ENCODE measurements at regions of chr7 and their contacts with region 1.

Region 1: GRCh38 chr7:1412322-1413261 is 46.7 kb downstream of the MICALL2 start:
- DNase-seq: peak; percentile 70 to 84 (median 79)
- H3K4me3 ChIP-seq: peak overlapping the region in 1 of 3 experiments; percentile 58
- H3K4me3 Mint-ChIP-seq: peak overlapping the region in 1 of 2 donors; percentile 62
- H3K27ac ChIP-seq: no peak overlapping the region
- H3K27ac Mint-ChIP-seq: peak overlapping the region in 1 of 7 donors; percentile 19
- H3K4me1 ChIP-seq: peaks cover 10 to 11% of the 10 kb centered on the region in 2 donors
- H3K4me1 Mint-ChIP-seq: peaks cover 11% of the 10 kb centered on the region
- H3K27me3 ChIP-seq: peaks cover 0 to 5% of the 10 kb centered on the region in 2 donors
- H3K27me3 Mint-ChIP-seq: peaks cover 13 to 23% (median 19%) of the 10 kb centered on the region in 3 donors
- CTCF ChIP-seq: peak; percentile 90

Region 2: DNA sequence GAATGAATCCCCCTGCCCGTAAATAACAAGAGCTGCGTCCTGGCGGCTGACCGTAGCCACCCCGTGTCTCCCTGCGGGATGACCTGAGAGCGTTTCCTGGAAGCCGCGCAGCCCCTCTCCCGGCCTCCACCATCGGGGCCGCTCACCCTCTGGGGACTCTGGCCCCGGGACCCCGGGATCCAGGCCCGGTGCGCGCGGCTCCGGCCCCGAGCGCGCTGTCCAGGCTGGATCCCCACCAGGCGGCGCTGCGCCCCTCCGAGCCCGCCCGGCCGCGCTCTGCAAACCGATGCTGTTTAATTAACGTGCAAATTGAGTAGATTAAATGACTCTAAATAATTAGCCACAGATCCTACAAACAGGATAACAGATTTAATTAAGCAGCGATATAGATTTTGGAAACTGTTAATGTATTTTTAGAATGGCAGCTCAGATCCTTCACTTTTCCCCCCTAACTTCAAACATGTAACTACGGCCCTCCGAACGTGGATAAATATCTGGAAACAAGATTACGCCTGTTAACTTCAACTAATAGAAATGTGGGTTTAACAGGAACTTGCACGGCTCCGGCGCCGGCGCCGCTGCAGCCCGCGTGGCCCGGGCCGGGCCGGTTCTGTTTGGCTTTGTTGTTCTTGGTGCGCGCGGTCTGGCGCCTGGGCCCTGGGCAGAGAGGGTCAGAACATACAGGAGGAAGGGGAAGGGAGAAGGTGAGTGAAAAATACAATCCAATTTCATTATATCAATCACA is 187.0 kb before region 1 on chr7:
- intact Hi-C with region 1: loop called in 1 of 2 experiments (anchors 10 kb)
- DNase-seq: no peak
- H3K4me3 ChIP-seq: no peak overlapping the region
- H3K4me3 Mint-ChIP-seq: peak overlapping the region in 1 of 2 donors; percentile 90
- H3K27ac ChIP-seq: no peak overlapping the region
- H3K27ac Mint-ChIP-seq: no peak overlapping the region
- H3K4me1 ChIP-seq: peaks cover 7 to 8% of the 10 kb centered on the region in 2 donors
- H3K4me1 Mint-ChIP-seq: peaks cover 10% of the 10 kb centered on the region
- H3K27me3 ChIP-seq: peaks cover 48 to 87% of the 10 kb centered on the region in 2 donors
- H3K27me3 Mint-ChIP-seq: peaks cover 85 to 93% (median 91%) of the 10 kb centered on the region in 3 donors
- CTCF ChIP-seq: peak; percentile 77

Region 3: GRCh38 chr7:1459522-1459892 is 46.9 kb after region 1 on chr7:
- intact Hi-C with region 1: loop called in 1 of 2 experiments (anchors 5 kb)
- DNase-seq: peak; percentile 98 to 99 (median 99)
- H3K4me3 ChIP-seq: peak overlapping the region; percentile 79 to 91 (median 90)
- H3K4me3 Mint-ChIP-seq: peak overlapping the region in 1 of 2 donors; percentile 84
- H3K27ac ChIP-seq: peak overlapping the region in 1 of 2 donors; percentile 87
- H3K27ac Mint-ChIP-seq: peak overlapping the region in 1 of 7 donors; percentile 60
- H3K4me1 ChIP-seq: peaks cover 40 to 53% of the 10 kb centered on the region in 2 donors
- H3K4me1 Mint-ChIP-seq: peaks cover 46% of the 10 kb centered on the region
- H3K27me3 ChIP-seq: no peaks in the 10 kb centered on the region
- H3K27me3 Mint-ChIP-seq: peaks cover 0 to 5% (median 5%) of the 10 kb centered on the region in 3 donors
- CTCF ChIP-seq: no peak

Region 4: DNA sequence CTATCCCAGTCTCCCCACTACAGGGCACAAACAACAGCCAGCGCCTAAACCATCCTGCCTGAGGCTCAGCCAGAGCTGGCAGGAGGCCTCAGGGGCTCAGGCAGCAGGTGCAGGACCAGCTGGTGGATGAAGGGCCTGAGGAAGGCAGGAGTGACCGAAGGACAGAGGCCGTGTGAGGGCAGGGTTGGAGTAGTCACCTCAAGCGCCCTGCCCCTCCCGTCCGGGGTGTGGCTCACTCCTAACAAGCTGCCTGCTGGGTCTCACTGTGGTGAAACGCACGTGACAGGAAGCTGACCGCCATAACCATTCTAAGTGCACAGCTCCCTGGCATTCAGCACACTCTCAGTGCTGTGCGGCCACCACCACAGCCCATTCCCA is 538.6 kb after region 1 on chr7:
- intact Hi-C with region 1: no loop called
- DNase-seq: peak; percentile 64 to 75 (median 69)
- H3K4me3 ChIP-seq: peak overlapping the region in 1 of 3 experiments; percentile 16
- H3K4me3 Mint-ChIP-seq: no peak overlapping the region
- H3K27ac ChIP-seq: peak overlapping the region; percentile 23 to 61
- H3K27ac Mint-ChIP-seq: peak overlapping the region; percentile 62 to 90 (median 83)
- H3K4me1 ChIP-seq: peaks cover 11 to 40% of the 10 kb centered on the region in 2 donors
- H3K4me1 Mint-ChIP-seq: peaks cover 37% of the 10 kb centered on the region
- H3K27me3 ChIP-seq: no peaks in the 10 kb centered on the region
- H3K27me3 Mint-ChIP-seq: no peaks in the 10 kb centered on the region
- CTCF ChIP-seq: no peak

Measured in CD14-positive monocyte (primary cell).